K562 (cell line): ENCODE measurements at regions of chr20 and their contacts with region 1.

Region 1: DNA sequence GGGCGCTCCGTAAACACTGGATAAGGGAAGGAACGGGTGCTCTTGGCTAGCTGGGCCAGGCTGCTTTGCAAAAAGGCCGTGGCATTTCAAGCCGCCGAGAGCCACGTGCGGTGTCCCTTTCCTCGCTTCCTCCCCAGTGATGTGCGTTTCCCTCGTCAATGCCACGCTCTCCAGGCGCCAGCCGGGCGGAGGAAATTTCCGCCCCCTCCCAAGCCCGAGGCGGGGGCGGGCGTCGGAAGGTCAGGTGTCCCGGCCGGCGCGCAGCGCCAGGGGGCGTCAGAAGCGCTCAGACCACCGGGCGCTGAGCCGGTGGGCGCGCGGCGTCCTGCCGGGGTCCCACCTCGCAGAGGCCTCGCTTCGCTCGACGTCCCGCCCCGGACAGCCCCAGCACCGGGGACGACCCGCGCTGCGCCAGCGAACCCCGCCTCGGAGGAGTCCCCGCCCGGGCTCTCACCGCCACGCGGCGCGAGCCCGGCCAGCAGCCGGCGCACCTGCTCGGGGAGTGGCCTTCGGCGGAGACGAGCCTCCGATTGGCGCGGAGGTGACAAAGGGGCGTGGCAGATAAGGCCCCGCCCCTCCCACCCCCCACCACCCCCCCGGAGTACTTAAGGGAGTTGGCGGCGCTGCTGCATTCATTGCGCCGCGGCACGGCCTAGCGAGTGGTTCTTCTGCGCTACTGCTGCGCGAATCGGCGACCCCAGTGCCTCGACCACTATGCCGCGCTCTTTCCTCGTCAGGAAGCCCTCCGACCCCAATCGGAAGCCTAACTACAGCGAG is at the start of gene SNAI1:
- DNase-seq: peak; percentile 91 to 98 (median 94)
- ATAC-seq: peak; percentile 87
- H3K4me3 ChIP-seq: peak within 1 kb of the TSS; percentile 92
- H3K27ac ChIP-seq: peak within 1 kb of the TSS; percentile 89
- H3K4me1 ChIP-seq: peaks cover 63 to 64% of the 10 kb centered on the region in 2 experiments
- H3K27me3 ChIP-seq: no peaks in the 10 kb centered on the region
- CTCF ChIP-seq: peak; percentile 65 to 78 (median 68)
- EP300 ChIP-seq: peak; percentile 23; the same call in 1 of the 2 replicates
- POLR2A ChIP-seq: peak; percentile 99
- RAD21 ChIP-seq: peak; percentile 81 to 83
- polyA plus RNA-seq, gene SNAI1: 0.32 to 0.80 TPM

Region 2: GRCh38 chr20:49880177-49880576 is 102.4 kb before region 1 on chr20:
- CTCF ChIA-PET with region 1: no interaction called
- POLR2A ChIA-PET with region 1: no interaction called
- in situ Hi-C with region 1: no loop called
- intact Hi-C with region 1: no loop called
- DNase-seq: no peak
- ATAC-seq: no peak
- H3K4me3 ChIP-seq: no peak overlapping the region
- H3K27ac ChIP-seq: no peak overlapping the region
- H3K4me1 ChIP-seq: no peaks in the 10 kb centered on the region
- H3K27me3 ChIP-seq: no peaks in the 10 kb centered on the region
- CTCF ChIP-seq: no peak
- EP300 ChIP-seq: no peak
- POLR2A ChIP-seq: no peak
- RAD21 ChIP-seq: no peak

Region 3: DNA sequence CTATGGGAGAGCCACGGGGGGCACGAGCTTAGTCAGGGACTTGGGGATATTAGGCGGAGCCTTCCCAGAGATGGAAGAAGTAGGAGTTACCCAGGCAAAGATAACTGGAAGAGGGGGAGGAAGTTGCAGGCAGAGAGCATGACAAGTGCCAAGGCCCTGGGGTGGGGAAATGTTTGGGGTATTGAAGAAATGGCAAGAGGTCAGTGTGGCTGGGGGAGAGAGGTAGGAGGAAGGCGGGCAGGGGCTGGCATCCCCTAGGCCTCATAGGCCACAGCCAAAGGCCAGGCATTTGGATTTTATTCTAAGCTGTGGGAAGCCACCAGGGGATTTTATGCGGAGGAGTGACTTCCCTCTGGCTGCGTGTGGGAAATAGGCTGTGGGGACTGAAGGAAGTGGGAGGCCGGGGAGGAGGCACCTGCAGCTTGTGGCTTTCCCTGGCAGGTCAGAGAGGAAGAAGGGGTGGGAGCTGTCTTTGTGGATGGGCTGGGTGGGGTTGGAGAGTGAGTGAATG is 23.0 kb after region 1 on chr20:
- CTCF ChIA-PET with region 1: no interaction called
- POLR2A ChIA-PET with region 1: interaction called, 78 read pairs
- in situ Hi-C with region 1: no loop called
- intact Hi-C with region 1: no loop called
- DNase-seq: no peak
- ATAC-seq: no peak; the same call in 2 of the 3 replicates
- H3K4me3 ChIP-seq: no peak overlapping the region
- H3K27ac ChIP-seq: no peak overlapping the region
- H3K4me1 ChIP-seq: peaks cover 3 to 16% of the 10 kb centered on the region in 2 experiments; a peak in 4 of 5 replicates
- H3K27me3 ChIP-seq: no peaks in the 10 kb centered on the region
- CTCF ChIP-seq: no peak
- EP300 ChIP-seq: no peak
- POLR2A ChIP-seq: no peak
- RAD21 ChIP-seq: no peak

Region 4: GRCh38 chr20:50038574-50039012 is 56.1 kb after region 1 on chr20:
- CTCF ChIA-PET with region 1: no interaction called
- POLR2A ChIA-PET with region 1: interaction called, 11 read pairs
- in situ Hi-C with region 1: no loop called
- intact Hi-C with region 1: no loop called
- DNase-seq: no peak
- ATAC-seq: no peak; the same call in 2 of the 3 replicates
- H3K4me3 ChIP-seq: no peak overlapping the region
- H3K27ac ChIP-seq: no peak overlapping the region
- H3K4me1 ChIP-seq: peaks cover 8 to 24% of the 10 kb centered on the region in 2 experiments; a peak in 4 of 5 replicates
- H3K27me3 ChIP-seq: no peaks in the 10 kb centered on the region
- CTCF ChIP-seq: no peak
- EP300 ChIP-seq: no peak
- POLR2A ChIP-seq: no peak
- RAD21 ChIP-seq: no peak

Region 5: GRCh38 chr20:50085452-50086365 is 103.2 kb after region 1 on chr20:
- CTCF ChIA-PET with region 1: interaction called, 18 read pairs
- POLR2A ChIA-PET with region 1: interaction called, 7 read pairs
- in situ Hi-C with region 1: no loop called
- intact Hi-C with region 1: no loop called
- DNase-seq: peak; percentile 57 to 69 (median 62)
- ATAC-seq: peak; percentile 87
- H3K4me3 ChIP-seq: no peak overlapping the region
- H3K27ac ChIP-seq: peak overlapping the region; percentile 41; the same call in 1 of the 3 replicates
- H3K4me1 ChIP-seq: peaks cover 4 to 20% of the 10 kb centered on the region in 2 experiments
- H3K27me3 ChIP-seq: no peaks in the 10 kb centered on the region
- CTCF ChIP-seq: peak; percentile 78 to 87 (median 85)
- EP300 ChIP-seq: no peak
- POLR2A ChIP-seq: no peak; the same call in 1 of the 2 replicates
- RAD21 ChIP-seq: peak; percentile 59 to 74

Region 6: GRCh38 chr20:50179507-50180016 is 197.0 kb after region 1 on chr20:
- CTCF ChIA-PET with region 1: interaction called, 5 read pairs
- POLR2A ChIA-PET with region 1: interaction called, 3 read pairs
- in situ Hi-C with region 1: no loop called
- intact Hi-C with region 1: loop called (anchors 1 kb)
- DNase-seq: no peak
- ATAC-seq: peak; percentile 74
- H3K4me3 ChIP-seq: no peak overlapping the region
- H3K27ac ChIP-seq: peak overlapping the region; percentile 33; the same call in 1 of the 3 replicates
- H3K4me1 ChIP-seq: peaks cover 14% of the 10 kb centered on the region in 2 experiments
- H3K27me3 ChIP-seq: no peaks in the 10 kb centered on the region
- CTCF ChIP-seq: no peak
- EP300 ChIP-seq: no peak
- POLR2A ChIP-seq: no peak
- RAD21 ChIP-seq: no peak

Region 7: GRCh38 chr20:50575847-50576720 is 593.5 kb after region 1 on chr20:
- CTCF ChIA-PET with region 1: no interaction called
- POLR2A ChIA-PET with region 1: no interaction called
- in situ Hi-C with region 1: loop called (anchors 10 kb)
- intact Hi-C with region 1: no loop called
- DNase-seq: peak; percentile 44 to 51 (median 47)
- ATAC-seq: peak; percentile 81
- H3K4me3 ChIP-seq: no peak overlapping the region
- H3K27ac ChIP-seq: no peak overlapping the region
- H3K4me1 ChIP-seq: peaks cover 4 to 10% of the 10 kb centered on the region in 2 experiments; a peak in 2 of 5 replicates
- H3K27me3 ChIP-seq: no peaks in the 10 kb centered on the region
- CTCF ChIP-seq: peak; percentile 57 to 67 (median 64)
- EP300 ChIP-seq: no peak
- POLR2A ChIP-seq: no peak
- RAD21 ChIP-seq: peak; percentile 51 to 70